Activated CD4-positive, alpha-beta T cell treated with anti-CD3 and anti-CD28 coated beads for 36 hours (primary cell): ENCODE measurements at regions of chr11 and their contacts with region 1.

Region 1: GRCh38 chr11:81869351-81870065 is 864.2 kb downstream of the FAM181B start:
- DNase-seq: peak; percentile 95
- ATAC-seq: peak; percentile 85
- H3K4me3 Mint-ChIP-seq: peak overlapping the region; percentile 56
- H3K27ac Mint-ChIP-seq: peak overlapping the region; percentile 72
- H3K4me1 Mint-ChIP-seq: peaks cover 44% of the 10 kb centered on the region
- H3K27me3 Mint-ChIP-seq: no peaks in the 10 kb centered on the region

Region 2: GRCh38 chr11:81669944-81670543 is 199.5 kb before region 1 on chr11:
- CTCF ChIA-PET with region 1: no interaction called
- POLR2A ChIA-PET with region 1: no interaction called
- intact Hi-C with region 1: no loop called
- DNase-seq: no peak
- ATAC-seq: no peak
- H3K4me3 Mint-ChIP-seq: no peak overlapping the region
- H3K27ac Mint-ChIP-seq: no peak overlapping the region
- H3K4me1 Mint-ChIP-seq: no peaks in the 10 kb centered on the region
- H3K27me3 Mint-ChIP-seq: peaks cover 2% of the 10 kb centered on the region

Region 3: DNA sequence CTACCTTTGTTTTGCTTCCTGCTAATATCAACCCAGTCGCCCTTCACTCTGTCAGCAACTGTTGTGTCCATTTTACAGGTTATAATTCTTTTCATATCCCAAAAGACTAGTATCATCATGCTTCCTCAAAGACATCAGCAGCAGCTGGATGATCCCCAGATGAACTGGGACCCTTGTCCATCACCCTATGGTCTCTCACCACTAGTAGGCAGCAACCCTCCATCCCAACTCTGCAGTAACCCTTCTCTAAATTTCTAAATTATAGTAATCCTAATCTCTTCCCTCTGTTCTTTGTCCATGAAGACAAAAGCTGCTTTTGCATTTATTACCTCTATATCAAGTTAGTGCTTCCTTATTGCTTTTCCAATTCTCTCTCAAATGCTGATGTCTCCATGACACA is 161.6 kb before region 1 on chr11:
- CTCF ChIA-PET with region 1: no interaction called
- POLR2A ChIA-PET with region 1: no interaction called
- intact Hi-C with region 1: no loop called
- DNase-seq: no peak
- ATAC-seq: no peak
- H3K4me3 Mint-ChIP-seq: no peak overlapping the region
- H3K27ac Mint-ChIP-seq: no peak overlapping the region
- H3K4me1 Mint-ChIP-seq: no peaks in the 10 kb centered on the region
- H3K27me3 Mint-ChIP-seq: peaks cover 5% of the 10 kb centered on the region

Region 4: DNA sequence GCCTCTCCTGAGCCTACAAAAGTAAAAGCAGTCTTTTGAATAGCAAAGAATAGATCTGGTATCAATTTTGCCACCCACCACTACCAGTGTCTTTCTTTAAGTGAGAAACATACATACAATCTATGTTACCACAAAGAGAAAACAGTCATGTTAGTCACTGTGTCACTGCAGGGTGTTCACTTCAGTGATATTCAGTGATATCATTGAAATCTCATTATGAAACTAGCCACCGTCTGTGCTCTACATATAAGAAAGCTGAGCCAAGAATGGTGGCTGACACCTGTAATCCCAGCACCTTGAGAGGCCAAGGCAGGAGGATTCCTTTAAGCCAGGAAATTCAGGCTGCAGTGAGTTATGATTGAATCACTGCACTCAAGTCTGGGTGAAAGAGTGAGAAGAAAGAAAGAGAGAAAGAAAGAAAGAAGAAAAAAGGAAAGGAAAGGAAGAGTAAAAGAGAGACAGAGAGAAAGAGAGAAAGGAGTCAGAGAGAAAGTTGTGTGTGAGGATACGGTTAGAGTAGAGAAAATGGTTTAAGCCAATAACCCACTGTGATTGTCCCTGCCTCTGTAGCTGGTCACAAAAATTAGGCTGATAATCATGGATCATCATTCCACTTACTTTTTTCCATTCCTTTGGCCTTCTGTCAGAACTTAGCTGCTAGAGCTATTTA is 17.0 kb after region 1 on chr11:
- CTCF ChIA-PET with region 1: no interaction called
- POLR2A ChIA-PET with region 1: no interaction called
- intact Hi-C with region 1: loop called (anchors 1 to 2 kb)
- DNase-seq: peak; percentile 13
- ATAC-seq: peak; percentile 99
- H3K4me3 Mint-ChIP-seq: no peak overlapping the region
- H3K27ac Mint-ChIP-seq: peak overlapping the region; percentile 58
- H3K4me1 Mint-ChIP-seq: peaks cover 10% of the 10 kb centered on the region
- H3K27me3 Mint-ChIP-seq: no peaks in the 10 kb centered on the region

Region 5: GRCh38 chr11:81963018-81963417 is 93.5 kb after region 1 on chr11:
- CTCF ChIA-PET with region 1: interaction called, 4 read pairs
- POLR2A ChIA-PET with region 1: no interaction called
- intact Hi-C with region 1: loop called in 1 of 2 experiments (anchors 2 kb)
- DNase-seq: no peak
- ATAC-seq: peak; percentile 39
- H3K4me3 Mint-ChIP-seq: no peak overlapping the region
- H3K27ac Mint-ChIP-seq: peak overlapping the region; percentile 10
- H3K4me1 Mint-ChIP-seq: peaks cover 26% of the 10 kb centered on the region
- H3K27me3 Mint-ChIP-seq: no peaks in the 10 kb centered on the region

Region 6: GRCh38 chr11:82003671-82004515 is 134.4 kb after region 1 on chr11:
- CTCF ChIA-PET with region 1: no interaction called
- POLR2A ChIA-PET with region 1: no interaction called
- intact Hi-C with region 1: loop called (anchors 1 kb)
- DNase-seq: peak; percentile 35
- ATAC-seq: peak; percentile 47
- H3K4me3 Mint-ChIP-seq: no peak overlapping the region
- H3K27ac Mint-ChIP-seq: peak overlapping the region; percentile 64
- H3K4me1 Mint-ChIP-seq: peaks cover 22% of the 10 kb centered on the region
- H3K27me3 Mint-ChIP-seq: no peaks in the 10 kb centered on the region

Region 7: DNA sequence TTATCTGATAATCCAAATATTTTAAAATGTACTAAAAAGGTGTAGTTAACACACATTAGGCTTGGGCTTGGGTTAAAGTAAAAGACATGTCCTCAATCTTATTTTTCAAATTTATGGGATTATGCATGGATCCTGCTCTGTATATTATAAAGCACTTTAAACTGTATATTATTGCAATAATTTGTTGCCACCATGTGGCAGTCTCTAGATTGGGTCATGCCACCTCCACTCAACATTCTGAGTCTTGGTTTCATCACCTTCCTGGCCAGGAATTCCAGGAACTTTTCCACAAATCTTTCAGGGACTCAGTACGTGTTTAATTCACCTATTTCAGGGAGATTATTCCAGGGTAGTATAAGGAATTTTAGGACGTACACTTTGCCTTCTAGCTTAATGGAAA is 168.6 kb after region 1 on chr11:
- CTCF ChIA-PET with region 1: no interaction called
- POLR2A ChIA-PET with region 1: no interaction called
- intact Hi-C with region 1: no loop called
- DNase-seq: no peak
- ATAC-seq: no peak
- H3K4me3 Mint-ChIP-seq: no peak overlapping the region
- H3K27ac Mint-ChIP-seq: no peak overlapping the region
- H3K4me1 Mint-ChIP-seq: no peaks in the 10 kb centered on the region
- H3K27me3 Mint-ChIP-seq: no peaks in the 10 kb centered on the region